ENCODE measurements at regions of chr3 and their contacts with region 1.

Region 1: DNA sequence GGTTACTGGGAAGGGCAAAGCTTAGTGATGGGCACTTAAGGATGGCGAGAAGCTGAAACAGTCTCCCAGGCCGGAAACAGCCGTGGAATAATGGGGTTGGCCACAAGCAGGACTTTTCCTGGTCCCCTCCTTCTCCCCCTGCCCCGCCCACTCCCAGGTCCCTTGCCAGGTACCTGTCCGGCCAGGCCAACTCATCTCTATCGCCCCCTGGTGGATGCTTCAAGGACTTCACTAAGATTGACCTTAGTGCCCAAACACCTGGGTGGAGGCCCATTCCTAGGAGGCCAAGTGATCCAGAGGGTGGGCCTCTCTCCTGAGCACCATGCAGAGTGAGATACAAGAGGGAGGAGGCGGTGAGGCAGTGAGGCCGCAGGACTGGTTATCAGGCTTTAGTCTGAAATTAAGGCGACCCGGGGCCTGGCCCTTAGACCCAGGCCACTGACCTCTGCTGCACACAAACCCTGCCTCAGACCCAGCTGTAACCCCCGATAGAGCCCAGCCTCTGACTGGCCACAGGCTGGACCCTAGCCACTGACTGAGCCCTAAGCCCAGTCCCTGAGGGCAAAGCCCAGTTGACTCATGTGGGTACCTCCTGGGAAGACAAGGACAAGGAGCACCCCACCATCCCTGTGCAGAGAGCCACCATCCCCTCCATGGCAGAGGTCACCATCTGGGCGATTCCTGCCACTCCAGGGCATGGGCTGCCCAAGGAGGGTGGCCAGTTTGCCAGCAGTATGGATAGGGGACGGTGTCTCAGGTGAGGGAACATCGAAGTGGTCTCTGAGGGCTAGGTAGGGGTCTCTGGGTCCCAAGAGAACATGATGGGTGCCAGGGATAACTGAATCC is 37.6 kb downstream of the VIPR1 start:
- DNase-seq: peak; percentile 95
- ATAC-seq: peak; percentile 83
- H3K4me3 Mint-ChIP-seq: no peak overlapping the region
- H3K27ac Mint-ChIP-seq: no peak overlapping the region
- H3K4me1 Mint-ChIP-seq: peaks cover 11% of the 10 kb centered on the region
- H3K27me3 Mint-ChIP-seq: no peaks in the 10 kb centered on the region
- CTCF ChIP-seq: peak; percentile 92

Region 2: DNA sequence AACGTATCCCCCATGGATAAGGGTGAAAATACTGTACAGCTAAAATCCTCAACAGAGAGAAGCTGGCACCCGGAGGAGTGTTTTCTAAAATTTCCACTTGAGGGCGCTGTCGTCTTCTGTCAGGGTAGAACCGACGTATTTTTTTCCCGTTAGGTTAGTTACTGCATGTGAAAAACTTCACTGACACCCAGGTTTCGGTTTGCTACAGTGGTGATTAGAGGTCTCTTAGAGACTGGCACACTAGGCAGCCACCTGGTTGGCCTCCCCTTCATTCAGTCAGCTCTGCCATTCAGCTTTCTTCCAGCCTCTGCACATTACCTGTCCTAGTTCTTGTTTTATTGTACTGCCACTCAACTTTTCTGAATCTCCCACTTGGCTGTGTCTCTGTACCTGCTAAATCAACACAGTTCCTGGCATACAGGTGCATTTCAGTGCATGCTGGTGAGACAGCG is 292.5 kb before region 1 on chr3:
- CTCF ChIA-PET with region 1: interaction called, 25 read pairs
- POLR2A ChIA-PET with region 1: no interaction called
- DNase-seq: peak; percentile 75
- ATAC-seq: peak; percentile 80
- H3K4me3 Mint-ChIP-seq: no peak overlapping the region
- H3K27ac Mint-ChIP-seq: no peak overlapping the region
- H3K4me1 Mint-ChIP-seq: no peaks in the 10 kb centered on the region
- H3K27me3 Mint-ChIP-seq: peaks cover 20% of the 10 kb centered on the region
- CTCF ChIP-seq: peak; percentile 68

Region 3: DNA sequence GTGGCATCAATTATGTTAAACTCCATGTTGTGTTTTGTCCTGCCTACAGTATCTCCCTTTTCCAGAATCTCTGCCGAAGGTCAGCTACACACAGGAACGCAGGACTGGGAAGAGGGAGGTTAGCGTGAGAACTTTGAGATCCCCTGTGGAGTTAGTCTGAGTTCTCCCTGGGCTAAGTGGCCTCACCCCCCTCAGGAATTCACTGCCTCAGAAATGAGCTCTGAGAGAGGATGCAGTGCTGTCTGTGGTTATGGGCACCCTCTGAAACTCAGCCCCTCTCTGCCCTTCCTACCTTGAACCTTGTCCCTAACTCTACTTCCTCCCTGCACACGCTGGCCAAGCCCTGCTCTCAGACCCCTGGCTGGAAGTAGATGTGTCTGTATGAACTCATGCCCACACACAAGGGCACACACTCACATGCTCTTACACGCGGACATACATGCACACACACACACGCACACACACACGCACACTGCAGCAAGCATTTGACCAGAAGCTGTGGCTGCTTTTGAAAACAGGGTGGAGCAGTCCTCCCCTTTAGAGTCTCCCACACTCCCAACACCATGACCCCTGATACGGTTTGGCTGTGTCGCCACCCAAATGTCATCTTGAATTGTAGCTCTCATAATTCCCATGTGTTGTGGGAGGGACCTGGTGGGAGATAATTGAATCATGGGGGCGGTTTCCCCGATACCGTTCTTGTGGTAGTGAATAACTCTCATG is 42.9 kb before region 1 on chr3:
- CTCF ChIA-PET with region 1: interaction called, 42 read pairs
- POLR2A ChIA-PET with region 1: interaction called, 9 read pairs
- DNase-seq: peak; percentile 63
- ATAC-seq: peak; percentile 65
- H3K4me3 Mint-ChIP-seq: peak overlapping the region; percentile 8; the same call in 1 of the 2 replicates
- H3K27ac Mint-ChIP-seq: peak overlapping the region; percentile 58; the same call in 1 of the 2 replicates
- H3K4me1 Mint-ChIP-seq: peaks cover 30% of the 10 kb centered on the region
- H3K27me3 Mint-ChIP-seq: peaks cover 54% of the 10 kb centered on the region
- CTCF ChIP-seq: no peak

Region 4: GRCh38 chr3:42511736-42512135 is 28.4 kb before region 1 on chr3:
- CTCF ChIA-PET with region 1: interaction called, 14 read pairs
- POLR2A ChIA-PET with region 1: no interaction called
- DNase-seq: no peak
- ATAC-seq: no peak
- H3K4me3 Mint-ChIP-seq: no peak overlapping the region
- H3K27ac Mint-ChIP-seq: no peak overlapping the region
- H3K4me1 Mint-ChIP-seq: peaks cover 24% of the 10 kb centered on the region
- H3K27me3 Mint-ChIP-seq: peaks cover 6% of the 10 kb centered on the region
- CTCF ChIP-seq: no peak

Region 5: DNA sequence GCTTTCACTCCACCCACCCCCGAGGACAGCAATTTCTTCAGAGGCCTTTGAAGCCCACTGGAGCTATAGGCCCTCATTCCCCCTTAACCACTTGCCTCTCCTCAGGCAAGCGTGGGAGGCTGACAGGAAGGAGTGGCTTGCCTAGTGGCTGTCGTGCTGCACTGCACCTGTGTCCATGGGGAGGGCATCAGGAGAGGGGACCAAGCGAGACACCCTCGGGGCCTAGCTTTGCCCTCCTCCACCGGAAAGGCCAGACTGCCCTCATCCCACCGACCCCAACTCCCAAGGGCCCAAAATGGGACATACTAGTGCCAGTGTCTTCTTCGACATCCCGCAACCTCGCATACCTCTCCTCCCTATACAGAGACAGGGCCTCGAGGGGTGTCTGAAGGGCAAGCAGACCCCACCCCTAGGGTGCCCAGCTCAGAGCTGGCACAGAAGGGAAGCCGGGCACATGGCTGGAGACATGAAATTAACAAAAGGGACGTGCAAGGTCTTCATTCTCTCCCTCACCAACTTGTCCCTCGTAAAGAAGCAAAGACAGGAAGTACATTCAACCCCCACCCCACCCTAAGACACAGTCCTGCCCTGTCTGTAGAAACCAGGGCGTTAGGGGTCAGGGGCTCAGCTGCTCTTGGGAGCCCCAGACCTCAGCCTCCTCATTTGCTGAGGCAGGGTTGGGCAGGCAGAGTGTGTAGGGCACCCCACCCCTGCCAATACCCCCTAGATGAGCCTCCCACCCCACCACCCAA is 13.3 kb before region 1 on chr3:
- CTCF ChIA-PET with region 1: interaction called, 18 read pairs
- POLR2A ChIA-PET with region 1: no interaction called
- DNase-seq: peak; percentile 30
- ATAC-seq: peak; percentile 82
- H3K4me3 Mint-ChIP-seq: no peak overlapping the region
- H3K27ac Mint-ChIP-seq: no peak overlapping the region
- H3K4me1 Mint-ChIP-seq: peaks cover 2% of the 10 kb centered on the region; the same call in 1 of the 2 replicates
- H3K27me3 Mint-ChIP-seq: no peaks in the 10 kb centered on the region
- CTCF ChIP-seq: no peak

Measured in WTC11 (cell line).